PC-3 (cell line): ENCODE measurements at regions of chr7 and their contacts with region 1.

Region 1: DNA sequence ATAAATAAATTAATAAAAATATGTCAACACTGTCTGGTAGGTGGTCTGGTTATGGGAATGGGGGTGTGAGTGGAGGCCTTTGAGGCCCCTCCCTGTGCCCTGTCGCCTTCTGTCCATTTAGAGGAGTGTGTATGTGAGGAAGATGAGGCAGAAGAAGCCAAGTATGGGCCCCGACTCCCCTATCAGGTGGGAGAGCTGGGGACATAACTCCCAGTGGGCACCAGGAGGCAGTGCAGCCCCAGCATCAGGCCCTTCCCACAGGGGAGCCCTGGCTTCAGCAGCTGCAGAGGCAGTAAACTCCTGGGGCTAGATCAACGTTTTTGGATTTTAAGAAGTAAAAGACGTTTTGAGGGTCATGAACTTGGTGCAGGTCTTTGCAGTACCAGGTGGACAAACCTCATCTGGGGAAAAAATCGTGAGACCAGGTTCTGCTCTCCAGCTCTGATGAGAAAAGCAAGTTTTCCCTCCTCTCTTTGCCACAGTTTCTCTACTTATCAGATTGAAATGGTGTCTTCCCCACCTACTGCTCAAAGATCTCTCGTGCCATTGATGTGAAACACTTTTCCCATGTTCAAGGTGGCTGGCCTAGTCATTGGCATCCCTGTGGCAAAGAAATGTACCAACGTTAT is 167.8 kb upstream of the EEPD1 start:
- DNase-seq: peak; percentile 83
- ATAC-seq: peak; percentile 96
- H3K4me3 ChIP-seq: no peak overlapping the region
- H3K27ac ChIP-seq: no peak overlapping the region
- H3K4me1 ChIP-seq: peaks cover 29% of the 10 kb centered on the region
- H3K27me3 ChIP-seq: no peaks in the 10 kb centered on the region
- CTCF ChIP-seq: peak; percentile 91

Region 2: GRCh38 chr7:36025190-36025589 is 40.0 kb after region 1 on chr7:
- CTCF ChIA-PET with region 1: no interaction called
- POLR2A ChIA-PET with region 1: no interaction called
- intact Hi-C with region 1: no loop called
- DNase-seq: no peak
- ATAC-seq: no peak
- H3K4me3 ChIP-seq: no peak overlapping the region
- H3K27ac ChIP-seq: no peak overlapping the region
- H3K4me1 ChIP-seq: no peaks in the 10 kb centered on the region
- H3K27me3 ChIP-seq: no peaks in the 10 kb centered on the region
- CTCF ChIP-seq: no peak

Region 3: DNA sequence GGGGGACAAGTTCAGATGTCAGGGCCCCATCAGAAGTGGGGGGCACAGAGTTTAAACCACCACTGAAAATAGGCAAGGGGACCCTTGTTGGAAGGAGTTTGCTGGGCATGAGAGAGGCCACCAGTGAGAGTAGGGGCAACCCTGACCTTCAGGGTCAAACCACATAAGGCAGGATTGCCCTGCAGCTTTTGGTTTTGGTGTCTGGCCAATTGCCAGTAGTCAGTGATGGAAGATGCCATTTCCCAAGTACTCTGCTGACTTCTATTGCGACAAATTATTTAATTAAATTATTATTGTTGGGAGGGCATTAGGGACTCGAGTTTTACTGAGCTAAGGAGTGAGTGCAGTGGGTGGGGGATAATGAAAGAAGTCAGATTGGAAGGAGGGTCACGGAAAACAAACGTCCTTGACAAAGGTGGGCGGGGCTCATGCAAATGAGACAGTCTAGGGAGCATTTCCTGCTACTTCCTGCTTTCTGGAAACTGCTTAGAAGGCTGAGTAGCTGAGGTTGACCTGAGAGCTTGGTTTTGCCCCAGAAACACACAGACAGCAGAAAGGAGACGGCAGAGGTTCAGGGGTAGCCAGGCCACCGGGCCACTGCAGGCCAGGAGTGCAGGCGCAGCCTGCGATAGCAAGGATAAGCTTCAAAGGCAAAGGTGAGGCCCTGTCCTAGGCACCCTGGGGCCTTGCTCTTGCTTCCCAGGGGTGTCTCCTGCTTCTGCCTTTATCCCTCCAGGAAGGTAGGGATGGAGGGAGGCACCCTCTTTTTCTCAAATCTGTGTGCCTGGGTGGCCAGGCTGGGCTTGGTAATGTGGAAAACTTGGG is 330.3 kb after region 1 on chr7:
- CTCF ChIA-PET with region 1: interaction called, 7 read pairs
- POLR2A ChIA-PET with region 1: no interaction called
- intact Hi-C with region 1: loop called (anchors 1 kb)
- DNase-seq: no peak
- ATAC-seq: 0 out of 2 replicates have a peak, but pooled peaks have one; percentile 17
- H3K4me3 ChIP-seq: no peak overlapping the region
- H3K27ac ChIP-seq: no peak overlapping the region
- H3K4me1 ChIP-seq: no peaks in the 10 kb centered on the region
- H3K27me3 ChIP-seq: no peaks in the 10 kb centered on the region
- CTCF ChIP-seq: no peak